ENCODE measurements at regions of chr11 and their contacts with region 1.

Region 1: DNA sequence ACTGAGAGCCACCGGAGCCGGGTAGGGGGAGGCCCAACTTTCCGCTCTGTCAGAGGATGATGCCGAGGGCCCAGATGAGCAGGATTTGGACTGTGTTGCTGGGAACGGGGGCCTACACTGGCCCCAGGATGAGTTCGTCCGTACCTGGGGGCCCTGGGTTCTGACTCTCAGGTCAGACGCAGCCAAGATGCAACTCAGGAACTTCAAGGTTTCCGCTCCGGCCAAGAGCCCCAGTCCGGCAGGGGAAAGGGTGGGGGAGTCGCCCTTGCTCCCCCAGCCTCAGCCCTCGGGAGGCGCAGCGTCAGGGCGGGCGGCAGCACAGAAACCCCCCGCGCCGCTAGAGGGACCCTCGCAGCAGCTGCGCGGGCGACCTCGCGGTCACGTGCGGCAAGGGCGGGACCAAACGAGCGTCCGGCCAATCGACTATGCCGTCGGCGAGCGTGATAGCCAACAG is 241 bp upstream of the ARL2 start:
- DNase-seq: peak; percentile 89
- ATAC-seq: peak; percentile 84
- H3K4me3 ChIP-seq: peak overlapping the region; percentile 74
- H3K27ac ChIP-seq: peak overlapping the region; percentile 72
- H3K4me1 ChIP-seq: peaks cover 14% of the 10 kb centered on the region
- H3K27me3 ChIP-seq: no peaks in the 10 kb centered on the region
- CTCF ChIP-seq: peak; percentile 58

Region 2: GRCh38 chr11:64878494-64879243 is 135.1 kb before region 1 on chr11 and contains the start of gene EHD1:
- CTCF ChIA-PET with region 1: no interaction called
- POLR2A ChIA-PET with region 1: interaction called, 14 read pairs
- intact Hi-C with region 1: no loop called
- DNase-seq: peak; percentile 100
- ATAC-seq: peak; percentile 73
- H3K4me3 ChIP-seq: peak within 1 kb of the TSS; percentile 78
- H3K27ac ChIP-seq: peak within 1 kb of the TSS; percentile 52
- H3K4me1 ChIP-seq: peaks cover 29% of the 10 kb centered on the region
- H3K27me3 ChIP-seq: no peaks in the 10 kb centered on the region
- CTCF ChIP-seq: peak; percentile 62
- total RNA-seq, gene EHD1: 340 and 370 TPM in 2 replicates

Region 3: DNA sequence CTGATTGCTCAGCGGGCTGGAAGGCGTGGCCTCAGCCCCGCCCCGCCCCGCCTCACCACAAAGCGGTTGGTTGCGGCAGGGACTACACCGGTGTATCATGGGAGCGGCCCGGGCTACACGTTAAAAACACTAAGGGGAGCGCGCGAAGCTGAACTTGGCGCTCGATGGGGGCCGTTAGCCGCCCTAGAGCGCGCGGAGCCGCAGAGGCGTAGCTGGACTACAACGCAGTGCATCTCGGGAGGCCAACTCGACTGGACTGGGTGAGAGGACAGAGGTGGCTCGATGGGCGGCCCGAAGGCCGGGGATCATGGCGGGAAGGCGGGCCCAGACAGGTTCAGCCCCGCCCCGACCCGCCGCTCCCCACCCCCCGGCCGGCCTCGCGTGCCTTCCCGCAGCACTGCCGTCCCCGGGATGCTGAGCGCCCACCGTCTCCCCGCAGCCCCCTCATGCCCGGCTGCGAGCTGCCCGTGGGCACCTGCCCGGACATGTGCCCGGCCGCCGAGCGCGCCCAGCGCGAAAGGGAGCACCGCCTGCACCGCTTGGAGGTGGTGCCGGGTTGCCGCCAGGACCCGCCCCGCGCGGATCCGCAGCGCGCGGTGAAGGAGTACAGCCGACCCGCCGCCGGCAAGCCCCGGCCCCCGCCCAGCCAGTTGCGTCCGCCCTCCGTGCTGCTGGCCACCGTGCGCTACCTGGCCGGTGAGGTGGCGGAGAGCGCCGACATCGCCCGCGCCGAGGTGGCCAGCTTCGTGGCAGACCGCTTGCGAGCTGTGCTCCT is 27.3 kb after region 1 on chr11 and contains the start of gene SAC3D1:
- CTCF ChIA-PET with region 1: no interaction called
- POLR2A ChIA-PET with region 1: no interaction called
- intact Hi-C with region 1: no loop called
- DNase-seq: peak; percentile 99
- ATAC-seq: peak; percentile 89
- H3K4me3 ChIP-seq: peak within 1 kb of the TSS; percentile 97
- H3K27ac ChIP-seq: peak within 1 kb of the TSS; percentile 87
- H3K4me1 ChIP-seq: peaks cover 35% of the 10 kb centered on the region
- H3K27me3 ChIP-seq: no peaks in the 10 kb centered on the region
- CTCF ChIP-seq: no peak
- total RNA-seq, gene SAC3D1: 61.0 and 82.0 TPM in 2 replicates

Region 4: GRCh38 chr11:65078151-65078550 is 64.4 kb after region 1 on chr11:
- CTCF ChIA-PET with region 1: no interaction called
- POLR2A ChIA-PET with region 1: no interaction called
- intact Hi-C with region 1: loop called (anchors 5 kb)
- DNase-seq: peak; percentile 69
- ATAC-seq: peak; percentile 92
- H3K4me3 ChIP-seq: no peak overlapping the region
- H3K27ac ChIP-seq: no peak overlapping the region
- H3K4me1 ChIP-seq: peaks cover 12% of the 10 kb centered on the region
- H3K27me3 ChIP-seq: no peaks in the 10 kb centered on the region
- CTCF ChIP-seq: peak; percentile 77

Measured in PC-3 (cell line).